ENCODE measurements at regions of chr6 and their contacts with region 1.

Region 1: GRCh38 chr6:99520855-99521632 is 5.8 kb upstream of the USP45 start:
- DNase-seq: peak; percentile 83
- H3K4me3 ChIP-seq: peak overlapping the region; percentile 56 to 76
- H3K27ac ChIP-seq: peak overlapping the region; percentile 87 to 89
- H3K4me1 ChIP-seq: no peaks in the 10 kb centered on the region
- H3K27me3 ChIP-seq: no peaks in the 10 kb centered on the region
- CTCF ChIP-seq: peak; percentile 58 to 89 (median 84)
- POLR2A ChIP-seq: peak; percentile 75

Region 2: DNA sequence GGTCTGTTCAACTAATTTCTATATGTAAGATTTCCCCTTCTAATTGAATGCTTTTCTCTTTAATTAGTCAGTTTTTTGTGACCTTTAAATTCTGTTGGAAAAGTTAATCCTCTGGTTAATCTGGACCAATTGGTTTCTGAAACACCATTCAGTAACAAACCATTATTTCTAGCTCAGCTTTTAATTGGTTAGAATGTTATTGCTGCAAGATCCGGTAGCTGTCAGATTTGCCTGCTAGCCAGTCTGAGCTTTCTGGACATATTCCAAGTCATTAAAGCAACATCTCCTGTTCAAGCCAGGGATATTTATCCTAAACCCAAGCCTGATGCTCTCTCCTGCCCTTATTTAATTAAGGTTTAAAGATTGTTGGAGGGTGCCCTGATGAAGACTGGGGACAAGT is 518.2 kb before region 1 on chr6:
- intact Hi-C with region 1: no loop called
- DNase-seq: no peak
- H3K4me3 ChIP-seq: no peak overlapping the region
- H3K27ac ChIP-seq: no peak overlapping the region
- H3K4me1 ChIP-seq: no peaks in the 10 kb centered on the region
- H3K27me3 ChIP-seq: no peaks in the 10 kb centered on the region
- CTCF ChIP-seq: no peak
- POLR2A ChIP-seq: no peak

Region 3: DNA sequence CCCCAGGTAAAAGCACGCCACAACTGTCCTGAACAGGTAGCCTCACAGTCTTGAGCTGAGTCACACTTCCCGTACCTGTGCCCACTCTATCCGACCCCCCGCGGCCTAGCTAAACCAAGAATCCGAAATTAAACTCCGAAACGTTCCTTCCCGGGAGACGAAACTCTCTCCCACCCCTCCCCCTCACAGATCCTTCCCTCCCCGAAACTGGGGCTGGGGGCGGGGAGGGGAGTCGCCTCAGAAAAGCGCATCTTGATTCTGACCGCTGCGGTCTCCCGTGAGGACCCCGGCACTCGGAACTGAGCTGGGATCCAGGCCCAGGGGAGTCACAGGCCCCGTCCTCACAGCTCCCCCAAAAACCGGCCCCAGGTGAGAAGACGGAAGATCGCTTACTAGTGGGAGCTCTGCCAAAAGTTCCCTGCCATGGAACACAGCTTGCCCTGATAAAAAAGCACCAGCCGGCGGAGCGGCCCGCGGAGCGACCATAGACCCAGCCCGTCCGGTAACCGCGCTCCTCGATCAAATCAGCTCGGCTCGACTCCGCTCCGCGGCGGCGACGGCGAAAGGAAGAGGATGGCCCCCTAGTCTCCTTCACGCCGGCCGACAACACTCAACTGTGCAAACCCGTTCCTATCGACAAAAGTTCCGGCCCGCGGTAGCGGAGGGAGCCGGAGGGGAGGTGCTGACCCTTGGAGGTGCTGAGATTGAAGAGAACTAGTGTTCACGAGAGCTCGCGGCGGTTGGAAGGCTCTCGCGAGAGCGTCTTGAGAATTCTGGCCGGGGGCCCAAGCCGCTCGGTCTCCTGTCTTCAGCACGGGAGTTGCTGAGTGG is 47.3 kb after region 1 on chr6 and contains the start of gene CCNC:
- intact Hi-C with region 1: loop called (anchors 5 kb)
- DNase-seq: peak; percentile 88
- H3K4me3 ChIP-seq: peak within 1 kb of the TSS; percentile 83 to 93
- H3K27ac ChIP-seq: peak within 1 kb of the TSS; percentile 89 to 90
- H3K4me1 ChIP-seq: no peaks in the 10 kb centered on the region
- H3K27me3 ChIP-seq: no peaks in the 10 kb centered on the region
- CTCF ChIP-seq: no peak
- POLR2A ChIP-seq: peak; percentile 63
- total RNA-seq, gene CCNC: 37.8 to 83.4 TPM

Measured in prostate gland (tissue), 2 donors.